T-cell (primary cell): ENCODE measurements at regions of chr15 and their contacts with region 1.

Region 1: GRCh38 chr15:62173215-62173614 is 8.1 kb upstream of the C2CD4B start:
- DNase-seq: no peak
- ATAC-seq: no peak
- H3K4me3 ChIP-seq: no peak overlapping the region
- H3K4me3 Mint-ChIP-seq: no peak overlapping the region
- H3K27ac ChIP-seq: no peak overlapping the region
- H3K27ac Mint-ChIP-seq: no peak overlapping the region
- H3K4me1 ChIP-seq: no peaks in the 10 kb centered on the region
- H3K4me1 Mint-ChIP-seq: no peaks in the 10 kb centered on the region
- H3K27me3 ChIP-seq: no peaks in the 10 kb centered on the region
- H3K27me3 Mint-ChIP-seq: peaks cover 26 to 37% of the 10 kb centered on the region in 2 donors

Region 2: DNA sequence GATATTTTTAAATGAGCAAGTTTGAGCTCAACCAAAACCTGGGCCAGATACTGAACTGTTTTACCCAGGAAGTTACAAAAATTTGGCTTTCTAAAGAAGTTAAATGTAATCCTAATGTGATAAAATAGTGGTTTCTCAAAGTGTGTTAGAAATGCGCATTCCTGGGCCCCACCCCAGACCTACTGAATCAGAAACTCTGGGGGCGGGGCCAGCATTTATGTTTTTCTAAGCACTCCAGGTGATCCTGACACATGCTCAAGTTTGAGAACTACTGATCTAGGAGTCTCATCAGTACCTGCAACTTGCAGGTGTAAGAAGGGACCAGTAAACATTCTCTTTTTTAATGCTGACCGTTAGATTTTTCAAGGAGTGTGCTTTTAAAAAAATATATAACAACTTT is 303.6 kb before region 1 on chr15:
- CTCF ChIA-PET with region 1: no interaction called
- POLR2A ChIA-PET with region 1: interaction called in 1 of 2 experiments, 16 read pairs
- DNase-seq: no peak
- ATAC-seq: no peak
- H3K4me3 ChIP-seq: no peak overlapping the region
- H3K4me3 Mint-ChIP-seq: no peak overlapping the region
- H3K27ac ChIP-seq: no peak overlapping the region
- H3K27ac Mint-ChIP-seq: no peak overlapping the region
- H3K4me1 ChIP-seq: no peaks in the 10 kb centered on the region
- H3K4me1 Mint-ChIP-seq: no peaks in the 10 kb centered on the region
- H3K27me3 ChIP-seq: no peaks in the 10 kb centered on the region
- H3K27me3 Mint-ChIP-seq: no peaks in the 10 kb centered on the region

Region 3: GRCh38 chr15:62035256-62035908 is 137.8 kb before region 1 on chr15:
- CTCF ChIA-PET with region 1: no interaction called
- POLR2A ChIA-PET with region 1: no interaction called
- DNase-seq: no peak
- ATAC-seq: no peak
- H3K4me3 ChIP-seq: no peak overlapping the region
- H3K4me3 Mint-ChIP-seq: no peak overlapping the region
- H3K27ac ChIP-seq: no peak overlapping the region
- H3K27ac Mint-ChIP-seq: no peak overlapping the region
- H3K4me1 ChIP-seq: no peaks in the 10 kb centered on the region
- H3K4me1 Mint-ChIP-seq: peaks cover 16 to 32% (median 29%) of the 10 kb centered on the region in 3 donors
- H3K27me3 ChIP-seq: no peaks in the 10 kb centered on the region
- H3K27me3 Mint-ChIP-seq: no peaks in the 10 kb centered on the region

Region 4: GRCh38 chr15:62150445-62150844 is 22.8 kb before region 1 on chr15:
- CTCF ChIA-PET with region 1: no interaction called
- POLR2A ChIA-PET with region 1: no interaction called
- DNase-seq: no peak
- ATAC-seq: no peak
- H3K4me3 ChIP-seq: no peak overlapping the region
- H3K4me3 Mint-ChIP-seq: no peak overlapping the region
- H3K27ac ChIP-seq: no peak overlapping the region
- H3K27ac Mint-ChIP-seq: no peak overlapping the region
- H3K4me1 ChIP-seq: no peaks in the 10 kb centered on the region
- H3K4me1 Mint-ChIP-seq: peaks cover 6 to 11% (median 9%) of the 10 kb centered on the region in 3 donors
- H3K27me3 ChIP-seq: peaks cover 0 to 8% of the 10 kb centered on the region in 2 experiments
- H3K27me3 Mint-ChIP-seq: peaks cover 0 to 10% of the 10 kb centered on the region in 2 donors

Region 5: GRCh38 chr15:62742409-62743171 is 569.4 kb after region 1 on chr15:
- CTCF ChIA-PET with region 1: no interaction called
- POLR2A ChIA-PET with region 1: no interaction called
- DNase-seq: peak in 21 of 35 experiments; percentile 2 to 57 (median 11)
- ATAC-seq: no peak
- H3K4me3 ChIP-seq: no peak overlapping the region
- H3K4me3 Mint-ChIP-seq: no peak overlapping the region
- H3K27ac ChIP-seq: no peak overlapping the region
- H3K27ac Mint-ChIP-seq: no peak overlapping the region
- H3K4me1 ChIP-seq: no peaks in the 10 kb centered on the region
- H3K4me1 Mint-ChIP-seq: peaks cover 5 to 9% (median 6%) of the 10 kb centered on the region in 3 donors
- H3K27me3 ChIP-seq: peaks cover 0 to 4% of the 10 kb centered on the region in 2 experiments
- H3K27me3 Mint-ChIP-seq: no peaks in the 10 kb centered on the region